ENCODE measurements at regions of chr5 and their contacts with region 1.

Region 1: DNA sequence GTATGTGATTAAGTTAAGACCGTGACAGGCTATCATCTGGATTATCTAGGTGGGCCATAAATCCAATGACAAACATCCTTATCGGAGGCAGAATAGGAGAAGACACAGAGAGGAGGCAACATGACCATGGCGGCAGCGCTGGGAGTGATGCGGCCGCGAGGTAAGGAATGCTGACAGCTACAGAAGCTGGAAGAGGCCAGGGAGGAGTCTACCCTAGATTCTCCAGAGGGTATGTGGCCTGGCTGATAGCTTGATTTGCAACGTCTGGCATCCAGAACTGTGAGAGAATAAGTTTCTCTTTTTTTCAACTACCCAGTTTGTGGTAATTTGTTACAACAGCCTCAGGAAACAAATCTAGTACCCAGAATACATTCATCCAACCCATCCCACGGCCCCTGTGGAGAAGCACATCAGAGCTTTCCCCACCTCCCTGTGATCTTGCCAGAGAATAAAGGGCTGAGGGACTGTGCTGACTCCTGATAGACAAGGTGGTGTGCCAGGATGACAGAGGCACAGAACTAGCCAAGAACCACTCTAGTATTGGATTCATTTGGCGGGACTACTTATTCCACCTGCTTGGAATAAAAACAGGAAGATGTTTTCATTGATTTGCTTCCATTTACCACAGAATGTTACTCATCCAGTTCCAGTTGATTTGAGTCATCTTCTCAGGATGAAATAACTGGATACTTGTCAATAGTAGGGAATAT is 187.4 kb downstream of the MAN2A1 start:
- DNase-seq: no peak
- H3K4me3 ChIP-seq: no peak overlapping the region
- H3K27ac ChIP-seq: no peak overlapping the region
- H3K27me3 ChIP-seq: no peaks in the 10 kb centered on the region
- CTCF ChIP-seq: no peak

Region 2: GRCh38 chr5:109723606-109724005 is 153.5 kb before region 1 on chr5:
- CTCF ChIA-PET with region 1: interaction called, 12 read pairs
- POLR2A ChIA-PET with region 1: no interaction called
- DNase-seq: no peak
- H3K4me3 ChIP-seq: no peak overlapping the region
- H3K27ac ChIP-seq: no peak overlapping the region
- H3K27me3 ChIP-seq: no peaks in the 10 kb centered on the region
- CTCF ChIP-seq: no peak